Mammary epithelial cell (primary cell): ENCODE measurements at regions of chr5 and their contacts with region 1.

Region 1: GRCh38 chr5:59609501-59610265 is 283.8 kb downstream of the PDE4D start:
- DNase-seq: no peak
- H3K4me3 ChIP-seq: no peak overlapping the region
- H3K27ac ChIP-seq: no peak overlapping the region
- H3K4me1 ChIP-seq: no peaks in the 10 kb centered on the region
- H3K27me3 ChIP-seq: no peaks in the 10 kb centered on the region
- CTCF ChIP-seq: no peak

Region 2: GRCh38 chr5:59548807-59549357 is 60.8 kb before region 1 on chr5:
- CTCF ChIA-PET with region 1: no interaction called
- dilution Hi-C with region 1: no loop called
- in situ Hi-C with region 1: no loop called
- intact Hi-C with region 1: no loop called
- DNase-seq: peak; percentile 37
- H3K4me3 ChIP-seq: no peak overlapping the region
- H3K27ac ChIP-seq: no peak overlapping the region
- H3K4me1 ChIP-seq: no peaks in the 10 kb centered on the region
- H3K27me3 ChIP-seq: no peaks in the 10 kb centered on the region
- CTCF ChIP-seq: no peak

Region 3: GRCh38 chr5:59648949-59649921 is 39.6 kb after region 1 on chr5:
- CTCF ChIA-PET with region 1: no interaction called
- dilution Hi-C with region 1: loop called (anchors 5 kb)
- in situ Hi-C with region 1: no loop called
- intact Hi-C with region 1: no loop called
- DNase-seq: no peak
- H3K4me3 ChIP-seq: no peak overlapping the region
- H3K27ac ChIP-seq: no peak overlapping the region
- H3K4me1 ChIP-seq: no peaks in the 10 kb centered on the region
- H3K27me3 ChIP-seq: no peaks in the 10 kb centered on the region
- CTCF ChIP-seq: no peak